ENCODE measurements at regions of chr16 and their contacts with region 1.

Region 1: DNA sequence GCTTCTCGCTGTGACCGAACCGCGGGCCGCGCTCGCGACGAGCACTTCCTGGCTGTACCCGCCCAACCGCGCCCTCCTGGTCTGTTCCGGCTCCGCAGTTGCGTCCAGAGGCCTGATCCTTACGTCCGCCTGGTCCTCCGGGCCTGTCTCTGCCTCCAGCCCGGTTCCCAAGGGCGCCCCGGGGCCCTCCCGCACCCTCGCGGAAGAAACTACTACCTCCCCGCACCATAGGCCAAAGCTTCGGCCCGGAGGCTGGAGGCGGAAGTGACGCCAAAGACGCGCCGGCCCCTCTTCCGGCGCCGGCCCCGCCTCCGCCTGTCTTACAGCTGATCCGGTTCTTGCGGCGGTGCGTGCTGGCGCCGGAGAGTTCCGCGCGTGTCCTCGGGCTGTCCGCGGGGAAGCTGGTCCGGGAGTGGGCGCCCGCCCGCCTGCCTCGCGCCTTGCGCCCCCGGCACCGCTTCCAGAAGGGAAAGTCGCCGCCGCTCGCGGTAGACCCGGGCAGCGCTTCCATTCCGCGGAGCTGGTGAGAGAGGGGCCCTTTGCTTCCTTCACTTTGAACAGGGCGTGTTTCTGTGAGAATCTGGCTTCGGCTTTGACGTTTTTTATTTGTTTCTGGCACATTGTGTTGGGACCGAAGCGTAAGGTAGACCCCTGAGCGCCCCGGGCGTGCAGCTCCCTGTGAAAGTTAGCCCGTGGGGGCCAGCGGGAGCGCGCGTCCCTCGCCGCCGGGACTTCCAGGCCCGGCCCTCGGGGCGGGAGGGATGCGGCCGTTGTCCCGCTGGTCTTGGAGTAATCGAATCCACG is at the start of gene ZNF778:
- DNase-seq: peak; percentile 92
- ATAC-seq: peak; percentile 85
- H3K4me3 ChIP-seq: peak within 1 kb of the TSS; percentile 80 to 92 (median 86)
- H3K4me3 Mint-ChIP-seq: peak within 1 kb of the TSS; percentile 80
- H3K27ac ChIP-seq: peak within 1 kb of the TSS; percentile 81 to 92
- H3K27ac Mint-ChIP-seq: peak within 1 kb of the TSS; percentile 80
- H3K4me1 ChIP-seq: peaks cover 12 to 17% of the 10 kb centered on the region in 2 donors
- H3K4me1 Mint-ChIP-seq: peaks cover 19% of the 10 kb centered on the region
- H3K27me3 ChIP-seq: no peaks in the 10 kb centered on the region
- H3K27me3 Mint-ChIP-seq: no peaks in the 10 kb centered on the region
- CTCF ChIP-seq: no peak
- total RNA-seq, gene ZNF778: 8.9 and 13.4 TPM in 2 replicates

Region 2: DNA sequence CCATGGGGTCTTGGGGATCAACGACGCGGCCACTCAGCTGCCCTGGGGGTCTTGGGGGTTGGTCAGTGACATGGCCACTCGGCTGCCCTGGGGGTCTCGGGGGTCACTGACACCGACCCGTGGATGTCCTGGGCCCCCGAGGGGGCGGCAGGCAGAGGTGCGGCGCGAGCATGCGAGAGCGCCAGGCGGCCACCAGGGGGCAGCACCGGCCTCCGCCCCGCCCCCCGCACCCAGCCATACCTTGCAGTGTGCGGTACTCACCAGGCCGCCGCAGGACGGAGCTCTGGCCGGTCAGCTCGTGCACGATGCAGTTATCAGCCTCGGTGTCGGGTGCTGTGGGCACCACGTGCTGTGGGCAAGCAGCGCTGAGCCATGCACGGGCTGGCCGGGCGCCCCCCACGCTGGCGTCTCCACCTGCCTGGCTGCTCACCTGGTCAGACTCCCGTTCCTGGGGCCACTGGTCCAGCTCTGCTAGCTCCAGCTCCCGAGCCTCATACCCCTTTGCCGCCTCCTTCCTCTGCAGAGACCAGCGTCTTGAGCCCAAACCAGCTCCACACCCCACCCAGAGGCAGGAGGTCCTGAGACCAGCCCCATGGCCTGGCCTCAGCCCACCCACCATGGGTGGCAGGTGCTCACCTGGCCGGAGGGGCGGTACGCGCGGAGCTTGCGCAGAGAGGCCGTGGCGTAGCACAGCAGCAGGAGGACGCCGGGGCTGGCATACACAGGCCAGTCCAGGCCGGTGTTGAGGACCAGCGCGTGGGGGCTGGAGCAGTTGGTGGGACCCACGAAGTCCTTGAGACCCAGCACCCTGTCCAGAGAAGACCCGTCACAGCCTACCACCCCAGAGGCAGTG is 480.1 kb before region 1 on chr16:
- CTCF ChIA-PET with region 1: interaction called, 30 read pairs
- POLR2A ChIA-PET with region 1: no interaction called
- intact Hi-C with region 1: loop called (anchors 1 kb)
- DNase-seq: peak; percentile 84
- ATAC-seq: peak; percentile 97
- H3K4me3 ChIP-seq: no peak overlapping the region
- H3K4me3 Mint-ChIP-seq: no peak overlapping the region
- H3K27ac ChIP-seq: no peak overlapping the region
- H3K27ac Mint-ChIP-seq: no peak overlapping the region
- H3K4me1 ChIP-seq: peaks cover 5 to 20% of the 10 kb centered on the region in 2 donors
- H3K4me1 Mint-ChIP-seq: peaks cover 6% of the 10 kb centered on the region
- H3K27me3 ChIP-seq: no peaks in the 10 kb centered on the region
- H3K27me3 Mint-ChIP-seq: no peaks in the 10 kb centered on the region
- CTCF ChIP-seq: peak; percentile 99

Region 3: DNA sequence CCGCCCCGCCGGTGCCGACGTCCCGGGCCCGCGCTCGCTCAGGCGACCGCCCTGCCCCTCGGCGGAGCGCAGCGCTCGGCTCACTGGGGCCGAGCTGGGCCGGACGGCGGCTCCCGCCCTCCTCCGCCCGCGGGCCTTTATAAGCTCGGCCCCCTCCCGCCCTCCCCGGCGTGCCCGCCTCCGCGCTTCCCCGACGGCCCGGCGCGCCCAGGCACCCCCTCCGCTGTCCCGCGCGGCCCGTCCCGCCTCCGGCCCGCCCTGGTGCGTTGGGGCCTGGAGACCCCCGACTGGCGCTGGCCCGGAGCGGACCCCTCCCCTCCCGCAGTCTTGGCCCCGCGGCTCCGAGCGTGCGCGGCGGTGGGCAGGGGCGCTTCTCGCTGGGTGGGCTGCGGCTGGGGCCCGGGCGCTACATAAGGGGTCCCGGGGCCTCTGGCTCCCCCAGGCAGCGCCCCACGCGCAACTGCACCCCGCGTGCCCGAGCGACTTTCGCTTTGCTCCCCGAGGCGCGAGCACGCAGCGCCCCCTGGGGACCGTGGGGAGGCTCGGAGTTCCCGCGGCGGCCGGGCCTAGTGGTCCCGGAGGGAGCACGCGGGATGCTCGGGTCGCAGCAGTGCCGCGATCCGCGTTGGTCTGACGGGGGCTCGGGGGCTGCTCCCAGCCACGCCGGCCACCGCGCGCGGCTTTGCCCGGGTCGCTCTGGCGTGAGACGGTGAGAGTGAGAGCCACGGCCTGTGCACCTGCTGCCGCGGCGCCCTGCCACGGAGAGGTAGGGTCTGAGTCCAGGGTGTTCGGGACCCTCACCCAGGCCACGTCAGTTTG is 432.3 kb before region 1 on chr16 and contains the start of gene PIEZO1:
- CTCF ChIA-PET with region 1: interaction called, 14 read pairs
- POLR2A ChIA-PET with region 1: interaction called, 3 read pairs
- intact Hi-C with region 1: loop called (anchors 1 kb)
- DNase-seq: peak; percentile 89
- ATAC-seq: peak; percentile 36
- H3K4me3 ChIP-seq: peak within 1 kb of the TSS in 4 of 5 experiments; percentile 48 to 71 (median 64)
- H3K4me3 Mint-ChIP-seq: peak within 1 kb of the TSS; percentile 73
- H3K27ac ChIP-seq: peak within 1 kb of the TSS; percentile 26 to 77
- H3K27ac Mint-ChIP-seq: peak within 1 kb of the TSS; percentile 77
- H3K4me1 ChIP-seq: peaks cover 52 to 55% of the 10 kb centered on the region in 2 donors
- H3K4me1 Mint-ChIP-seq: peaks cover 47% of the 10 kb centered on the region
- H3K27me3 ChIP-seq: no peaks in the 10 kb centered on the region
- H3K27me3 Mint-ChIP-seq: no peaks in the 10 kb centered on the region
- CTCF ChIP-seq: peak; percentile 87
- total RNA-seq, gene PIEZO1: 108 and 118 TPM in 2 replicates

Region 4: GRCh38 chr16:88856828-88857733 is 360.5 kb before region 1 on chr16 and contains the starts of genes GALNS and TRAPPC2L:
- CTCF ChIA-PET with region 1: interaction called, 10 read pairs
- POLR2A ChIA-PET with region 1: interaction called, 3 read pairs
- intact Hi-C with region 1: loop called (anchors 1 kb)
- DNase-seq: peak; percentile 97
- ATAC-seq: peak; percentile 91
- H3K4me3 ChIP-seq: peak within 1 kb of the TSS; percentile 80 to 98 (median 93)
- H3K4me3 Mint-ChIP-seq: peak within 1 kb of the TSS; percentile 97
- H3K27ac ChIP-seq: peak within 1 kb of the TSS; percentile 63 to 84
- H3K27ac Mint-ChIP-seq: peak within 1 kb of the TSS; percentile 94
- H3K4me1 ChIP-seq: peaks cover 30 to 36% of the 10 kb centered on the region in 2 donors
- H3K4me1 Mint-ChIP-seq: peaks cover 38% of the 10 kb centered on the region
- H3K27me3 ChIP-seq: no peaks in the 10 kb centered on the region
- H3K27me3 Mint-ChIP-seq: no peaks in the 10 kb centered on the region
- CTCF ChIP-seq: no peak
- total RNA-seq, gene GALNS: 68.4 and 81.3 TPM in 2 replicates
- total RNA-seq, gene TRAPPC2L: 55.5 and 65.1 TPM in 2 replicates

Region 5: DNA sequence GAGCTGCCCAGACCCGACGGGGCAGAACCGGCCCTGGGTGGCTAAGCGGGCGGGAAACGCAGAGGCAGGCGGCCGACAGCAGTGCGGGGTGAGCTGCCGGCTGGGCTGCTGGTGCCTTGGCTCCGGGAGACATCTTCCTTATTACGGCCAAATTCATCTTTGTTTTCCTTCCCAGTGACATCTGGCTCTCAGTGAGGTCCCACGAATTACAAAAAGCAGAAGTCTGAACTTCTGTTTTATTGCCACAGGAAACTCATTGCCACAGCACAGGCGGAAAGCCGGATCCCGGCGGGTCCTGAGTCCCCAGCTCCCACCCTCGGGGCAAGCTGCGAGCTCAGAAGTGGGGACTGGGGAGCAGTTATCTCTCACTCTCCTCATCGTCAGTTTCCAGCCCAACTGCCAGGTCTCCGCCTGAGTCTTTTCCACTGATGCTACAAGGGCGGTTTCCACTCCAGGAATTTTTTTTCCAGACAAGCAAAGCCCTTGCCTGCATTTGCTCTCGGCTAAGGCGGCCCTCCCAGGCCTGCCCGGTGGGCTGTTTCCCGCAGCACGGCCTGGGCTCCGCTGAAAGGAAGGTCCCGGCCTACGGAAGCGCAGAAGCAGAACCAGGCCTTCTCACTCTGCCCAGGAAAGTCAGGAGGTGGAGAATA is 280.9 kb before region 1 on chr16:
- CTCF ChIA-PET with region 1: interaction called, 3 read pairs
- POLR2A ChIA-PET with region 1: no interaction called
- intact Hi-C with region 1: loop called (anchors 1 kb)
- DNase-seq: peak; percentile 80
- ATAC-seq: peak; percentile 31
- H3K4me3 ChIP-seq: peak overlapping the region; percentile 35 to 69 (median 49)
- H3K4me3 Mint-ChIP-seq: peak overlapping the region; percentile 84
- H3K27ac ChIP-seq: peak overlapping the region; percentile 35 to 76
- H3K27ac Mint-ChIP-seq: peak overlapping the region; percentile 90
- H3K4me1 ChIP-seq: peaks cover 45 to 50% of the 10 kb centered on the region in 2 donors
- H3K4me1 Mint-ChIP-seq: peaks cover 48% of the 10 kb centered on the region
- H3K27me3 ChIP-seq: no peaks in the 10 kb centered on the region
- H3K27me3 Mint-ChIP-seq: no peaks in the 10 kb centered on the region
- CTCF ChIP-seq: no peak

Region 6: GRCh38 chr16:89093602-89094251 is 123.9 kb before region 1 on chr16 and contains the start of gene ACSF3:
- CTCF ChIA-PET with region 1: interaction called, 3 read pairs
- POLR2A ChIA-PET with region 1: no interaction called
- intact Hi-C with region 1: loop called (anchors 10 kb)
- DNase-seq: peak; percentile 83
- ATAC-seq: peak; percentile 61
- H3K4me3 ChIP-seq: peak within 1 kb of the TSS; percentile 55 to 84 (median 68)
- H3K4me3 Mint-ChIP-seq: peak within 1 kb of the TSS; percentile 92
- H3K27ac ChIP-seq: peak within 1 kb of the TSS; percentile 29 to 74
- H3K27ac Mint-ChIP-seq: peak within 1 kb of the TSS; percentile 92
- H3K4me1 ChIP-seq: peaks cover 43 to 53% of the 10 kb centered on the region in 2 donors
- H3K4me1 Mint-ChIP-seq: peaks cover 49% of the 10 kb centered on the region
- H3K27me3 ChIP-seq: peaks cover 0 to 11% (median 4%) of the 10 kb centered on the region in 4 experiments
- H3K27me3 Mint-ChIP-seq: peaks cover 23% of the 10 kb centered on the region
- CTCF ChIP-seq: no peak
- total RNA-seq, gene ACSF3: 113 and 115 TPM in 2 replicates

Region 7: DNA sequence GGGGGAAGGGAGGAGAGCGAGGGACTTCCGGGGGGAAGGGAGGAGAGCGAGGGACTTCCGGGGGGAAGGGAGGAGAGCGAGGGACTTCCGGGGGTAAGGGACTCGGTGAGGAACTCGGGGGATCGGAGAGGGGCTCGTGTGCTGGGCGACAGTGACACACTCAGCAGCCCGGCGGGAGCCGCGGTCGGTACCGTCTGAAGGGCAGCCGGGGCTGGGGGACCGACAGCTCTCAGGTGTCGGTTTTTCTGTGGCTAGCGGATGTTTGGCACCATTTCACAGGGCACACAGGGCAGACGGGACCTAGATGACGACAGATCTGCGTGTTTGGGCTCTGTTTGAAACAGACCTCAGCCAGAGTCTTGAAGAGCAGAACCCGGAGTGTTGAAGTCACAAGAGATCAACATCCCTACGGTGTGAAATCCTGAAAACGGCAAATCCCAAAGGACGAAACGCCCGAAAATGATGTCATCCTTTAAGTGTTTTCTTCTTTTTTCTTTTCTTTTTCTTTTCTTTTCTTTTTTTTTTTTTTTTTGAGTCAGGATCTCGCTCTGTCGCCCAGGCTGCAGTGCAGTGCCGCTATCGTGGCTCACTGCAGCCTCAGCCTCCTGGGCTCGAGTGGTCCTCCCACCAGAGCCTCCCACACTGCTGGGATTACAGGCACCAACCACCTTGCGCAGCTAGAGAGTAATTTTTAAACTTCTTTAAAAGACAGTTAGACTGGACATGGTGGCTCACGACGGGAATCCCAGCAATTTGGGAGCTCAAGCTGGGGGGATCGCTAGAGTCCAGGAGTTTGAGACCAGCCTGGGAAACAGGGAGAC is 23.8 kb after region 1 on chr16:
- CTCF ChIA-PET with region 1: interaction called, 11 read pairs
- POLR2A ChIA-PET with region 1: interaction called, 4 read pairs
- intact Hi-C with region 1: loop called (anchors 1 kb)
- DNase-seq: peak; percentile 94
- ATAC-seq: peak; percentile 77
- H3K4me3 ChIP-seq: peak overlapping the region; percentile 74 to 95 (median 82)
- H3K4me3 Mint-ChIP-seq: peak overlapping the region; percentile 99
- H3K27ac ChIP-seq: peak overlapping the region; percentile 93 to 97
- H3K27ac Mint-ChIP-seq: peak overlapping the region; percentile 100
- H3K4me1 ChIP-seq: peaks cover 0 to 11% of the 10 kb centered on the region in 2 donors
- H3K4me1 Mint-ChIP-seq: peaks cover 14% of the 10 kb centered on the region
- H3K27me3 ChIP-seq: no peaks in the 10 kb centered on the region
- H3K27me3 Mint-ChIP-seq: no peaks in the 10 kb centered on the region
- CTCF ChIP-seq: no peak

Measured in B cell (primary cell).